ENCODE measurements at regions of chr15 and their contacts with region 1.

Region 1: GRCh38 chr15:42495361-42496212 is at the start of gene SNAP23:
- DNase-seq: peak; percentile 59 to 91 (median 76)
- ATAC-seq: peak; percentile 92
- H3K4me3 ChIP-seq: peak within 1 kb of the TSS; percentile 98
- H3K4me3 Mint-ChIP-seq: peak within 1 kb of the TSS; percentile 98
- H3K27ac ChIP-seq: peak within 1 kb of the TSS; percentile 64 to 70
- H3K27ac Mint-ChIP-seq: peak within 1 kb of the TSS; percentile 94
- H3K4me1 ChIP-seq: peaks cover 52% of the 10 kb centered on the region
- H3K4me1 Mint-ChIP-seq: peaks cover 75% of the 10 kb centered on the region
- H3K27me3 ChIP-seq: no peaks in the 10 kb centered on the region
- H3K27me3 Mint-ChIP-seq: no peaks in the 10 kb centered on the region
- CTCF ChIP-seq: no peak
- total RNA-seq, gene SNAP23: 37.4 to 40.1 TPM

Region 2: DNA sequence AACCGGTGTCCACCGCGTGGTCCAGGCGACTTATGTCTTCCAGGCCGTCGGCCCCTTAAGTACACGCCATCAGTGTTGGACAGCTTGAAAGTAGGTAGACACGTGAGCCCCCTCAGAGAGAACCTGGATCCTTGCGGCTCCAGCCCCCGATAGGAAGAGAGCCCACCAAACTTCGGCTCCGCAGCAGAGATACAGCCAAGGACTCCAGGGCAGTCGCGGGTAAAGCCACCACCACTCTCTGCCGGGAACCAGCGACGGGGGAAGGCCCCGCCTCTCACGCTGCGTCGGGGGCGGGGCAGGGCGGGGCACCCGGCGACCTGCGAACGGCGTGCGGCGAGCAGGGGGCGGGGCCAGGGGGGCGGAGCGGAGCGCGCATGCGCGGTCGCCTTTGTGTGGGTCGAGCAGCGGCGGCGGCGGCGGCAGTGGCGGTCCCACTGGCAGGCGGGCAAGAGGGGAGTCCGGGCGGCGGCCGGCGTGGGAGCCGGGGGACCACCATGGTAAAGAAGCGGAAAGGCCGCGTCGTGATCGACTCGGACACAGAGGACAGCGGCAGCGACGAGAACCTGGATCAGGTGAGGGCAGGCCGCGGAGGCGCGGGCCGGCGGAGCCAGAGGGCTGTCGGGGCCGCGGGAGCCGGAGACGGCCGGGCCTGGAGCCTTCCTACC is 1078.7 kb before region 1 on chr15 and contains the start of gene RTF1:
- CTCF ChIA-PET with region 1: no interaction called
- POLR2A ChIA-PET with region 1: no interaction called
- intact Hi-C with region 1: loop called in 1 of 2 experiments (anchors 5 kb)
- DNase-seq: peak; percentile 91 to 99 (median 97)
- ATAC-seq: peak; percentile 96
- H3K4me3 ChIP-seq: peak within 1 kb of the TSS; percentile 97
- H3K4me3 Mint-ChIP-seq: peak within 1 kb of the TSS; percentile 90
- H3K27ac ChIP-seq: peak within 1 kb of the TSS; percentile 48 to 72
- H3K27ac Mint-ChIP-seq: peak within 1 kb of the TSS; percentile 92
- H3K4me1 ChIP-seq: peaks cover 30% of the 10 kb centered on the region
- H3K4me1 Mint-ChIP-seq: peaks cover 47% of the 10 kb centered on the region
- H3K27me3 ChIP-seq: no peaks in the 10 kb centered on the region
- H3K27me3 Mint-ChIP-seq: no peaks in the 10 kb centered on the region
- CTCF ChIP-seq: no peak
- total RNA-seq, gene RTF1: 29.9 to 34.2 TPM

Region 3: GRCh38 chr15:42273102-42273899 is 222.3 kb before region 1 on chr15 and contains the starts of genes GANC and TMEM87A:
- CTCF ChIA-PET with region 1: no interaction called
- POLR2A ChIA-PET with region 1: interaction called, 14 read pairs
- intact Hi-C with region 1: loop called in 1 of 2 experiments (anchors 2 kb)
- DNase-seq: peak; percentile 90 to 99 (median 94)
- ATAC-seq: peak; percentile 89
- H3K4me3 ChIP-seq: peak within 1 kb of the TSS; percentile 70
- H3K4me3 Mint-ChIP-seq: peak within 1 kb of the TSS; percentile 90
- H3K27ac ChIP-seq: peak within 1 kb of the TSS; percentile 92 to 95
- H3K27ac Mint-ChIP-seq: peak within 1 kb of the TSS; percentile 98
- H3K4me1 ChIP-seq: peaks cover 12% of the 10 kb centered on the region
- H3K4me1 Mint-ChIP-seq: peaks cover 76% of the 10 kb centered on the region
- H3K27me3 ChIP-seq: no peaks in the 10 kb centered on the region
- H3K27me3 Mint-ChIP-seq: no peaks in the 10 kb centered on the region
- CTCF ChIP-seq: no peak
- total RNA-seq, gene GANC: 22.3 to 23.9 TPM
- total RNA-seq, gene TMEM87A: 48.7 to 51.4 TPM

Region 4: GRCh38 chr15:42548253-42549031 is 52.9 kb after region 1 on chr15 and contains the starts of genes HAUS2 and LRRC57:
- CTCF ChIA-PET with region 1: no interaction called
- POLR2A ChIA-PET with region 1: interaction called, 19 read pairs
- intact Hi-C with region 1: loop called (anchors 1 to 2 kb)
- DNase-seq: peak; percentile 72 to 93 (median 83)
- ATAC-seq: peak; percentile 78
- H3K4me3 ChIP-seq: peak within 1 kb of the TSS; percentile 96
- H3K4me3 Mint-ChIP-seq: peak within 1 kb of the TSS; percentile 91
- H3K27ac ChIP-seq: peak within 1 kb of the TSS; percentile 76 to 84
- H3K27ac Mint-ChIP-seq: peak within 1 kb of the TSS; percentile 92
- H3K4me1 ChIP-seq: peaks cover 28% of the 10 kb centered on the region
- H3K4me1 Mint-ChIP-seq: peaks cover 64% of the 10 kb centered on the region
- H3K27me3 ChIP-seq: no peaks in the 10 kb centered on the region
- H3K27me3 Mint-ChIP-seq: no peaks in the 10 kb centered on the region
- CTCF ChIP-seq: no peak
- total RNA-seq, gene HAUS2: 23.0 to 28.2 TPM
- total RNA-seq, gene LRRC57: 25.8 to 29.6 TPM

Region 5: GRCh38 chr15:42581272-42581730 is 85.7 kb after region 1 on chr15:
- CTCF ChIA-PET with region 1: interaction called, 3 read pairs
- POLR2A ChIA-PET with region 1: interaction called, 16 read pairs
- intact Hi-C with region 1: no loop called
- DNase-seq: peak; percentile 60 to 89 (median 78)
- ATAC-seq: peak; percentile 100
- H3K4me3 ChIP-seq: peak overlapping the region; percentile 62
- H3K4me3 Mint-ChIP-seq: peak overlapping the region; percentile 87
- H3K27ac ChIP-seq: peak overlapping the region; percentile 47 to 67
- H3K27ac Mint-ChIP-seq: peak overlapping the region; percentile 86
- H3K4me1 ChIP-seq: peaks cover 18% of the 10 kb centered on the region
- H3K4me1 Mint-ChIP-seq: peaks cover 40% of the 10 kb centered on the region
- H3K27me3 ChIP-seq: no peaks in the 10 kb centered on the region
- H3K27me3 Mint-ChIP-seq: peaks cover 13% of the 10 kb centered on the region
- CTCF ChIP-seq: no peak

Region 6: GRCh38 chr15:42736793-42737528 is 241.4 kb after region 1 on chr15 and contains the start of gene CDAN1:
- CTCF ChIA-PET with region 1: no interaction called
- POLR2A ChIA-PET with region 1: no interaction called
- intact Hi-C with region 1: loop called in 1 of 2 experiments (anchors 10 kb)
- DNase-seq: peak; percentile 84 to 97 (median 92)
- ATAC-seq: peak; percentile 91
- H3K4me3 ChIP-seq: peak within 1 kb of the TSS; percentile 65
- H3K4me3 Mint-ChIP-seq: peak within 1 kb of the TSS; percentile 93
- H3K27ac ChIP-seq: peak within 1 kb of the TSS; percentile 64 to 69
- H3K27ac Mint-ChIP-seq: peak within 1 kb of the TSS; percentile 88
- H3K4me1 ChIP-seq: peaks cover 25% of the 10 kb centered on the region
- H3K4me1 Mint-ChIP-seq: peaks cover 18% of the 10 kb centered on the region
- H3K27me3 ChIP-seq: no peaks in the 10 kb centered on the region
- H3K27me3 Mint-ChIP-seq: no peaks in the 10 kb centered on the region
- CTCF ChIP-seq: no peak
- total RNA-seq, gene CDAN1: 23.2 to 24.7 TPM

Region 7: GRCh38 chr15:42788725-42789124 is 293.1 kb after region 1 on chr15:
- CTCF ChIA-PET with region 1: no interaction called
- POLR2A ChIA-PET with region 1: no interaction called
- intact Hi-C with region 1: no loop called
- DNase-seq: no peak
- ATAC-seq: no peak
- H3K4me3 ChIP-seq: no peak overlapping the region
- H3K4me3 Mint-ChIP-seq: no peak overlapping the region
- H3K27ac ChIP-seq: no peak overlapping the region
- H3K27ac Mint-ChIP-seq: no peak overlapping the region
- H3K4me1 ChIP-seq: no peaks in the 10 kb centered on the region
- H3K4me1 Mint-ChIP-seq: no peaks in the 10 kb centered on the region
- H3K27me3 ChIP-seq: no peaks in the 10 kb centered on the region
- H3K27me3 Mint-ChIP-seq: no peaks in the 10 kb centered on the region
- CTCF ChIP-seq: no peak

Region 8: GRCh38 chr15:43127752-43128151 is 632.2 kb after region 1 on chr15:
- CTCF ChIA-PET with region 1: no interaction called
- POLR2A ChIA-PET with region 1: no interaction called
- intact Hi-C with region 1: loop called in 1 of 2 experiments (anchors 10 kb)
- DNase-seq: no peak
- ATAC-seq: no peak
- H3K4me3 ChIP-seq: no peak overlapping the region
- H3K4me3 Mint-ChIP-seq: peak overlapping the region; percentile 4
- H3K27ac ChIP-seq: no peak overlapping the region
- H3K27ac Mint-ChIP-seq: no peak overlapping the region
- H3K4me1 ChIP-seq: peaks cover 9% of the 10 kb centered on the region
- H3K4me1 Mint-ChIP-seq: peaks cover 9% of the 10 kb centered on the region
- H3K27me3 ChIP-seq: no peaks in the 10 kb centered on the region
- H3K27me3 Mint-ChIP-seq: peaks cover 8% of the 10 kb centered on the region
- CTCF ChIP-seq: no peak